Heart left ventricle (tissue), 16 donors: ENCODE measurements at regions of chr1 and their contacts with region 1.

Region 1: GRCh38 chr1:6800745-6801144 is 15.5 kb downstream of the CAMTA1 start:
- DNase-seq: no peak
- ATAC-seq: no peak
- H3K4me3 ChIP-seq: no peak overlapping the region
- H3K27ac ChIP-seq: peak overlapping the region in 11 of 12 donors; percentile 19 to 71 (median 53)
- H3K4me1 ChIP-seq: peaks cover 6 to 73% (median 53%) of the 10 kb centered on the region in 12 donors
- H3K27me3 ChIP-seq: no peaks in the 10 kb centered on the region
- CTCF ChIP-seq: no peak
- POLR2A ChIP-seq: no peak

Region 2: DNA sequence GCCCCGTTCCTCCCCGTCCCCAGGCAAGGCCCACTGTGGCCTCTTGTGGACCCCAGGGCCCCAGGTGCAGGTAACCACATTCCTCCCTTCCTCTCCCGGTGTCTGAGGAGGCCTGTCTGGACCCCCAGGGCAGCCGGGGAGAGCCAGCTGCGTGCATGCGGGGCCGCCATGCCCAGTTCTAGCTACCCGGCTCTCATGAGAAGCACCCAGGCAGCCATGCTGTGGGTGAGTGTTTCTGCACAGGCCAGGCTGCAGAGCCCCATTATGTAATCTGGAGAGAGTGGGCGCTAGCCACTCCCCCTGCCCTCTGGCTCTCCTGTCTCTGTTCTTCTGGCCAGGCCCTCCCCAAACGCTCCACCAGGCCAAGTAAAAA is 290.8 kb before region 1 on chr1:
- intact Hi-C with region 1: no loop called
- DNase-seq: peak in 1 of 5 donors; percentile 44
- ATAC-seq: peak in 3 of 4 donors; percentile 21 to 66 (median 41)
- H3K4me3 ChIP-seq: no peak overlapping the region
- H3K27ac ChIP-seq: peak overlapping the region in 1 of 12 donors; percentile 24
- H3K4me1 ChIP-seq: peaks cover 0 to 22% (median 0%) of the 10 kb centered on the region in 12 donors
- H3K27me3 ChIP-seq: no peaks in the 10 kb centered on the region
- CTCF ChIP-seq: no peak
- POLR2A ChIP-seq: no peak

Region 3: GRCh38 chr1:6880951-6881690 is 80.4 kb after region 1 on chr1:
- intact Hi-C with region 1: loop called in 5 of 10 experiments (anchors 2 to 10 kb)
- DNase-seq: no peak
- ATAC-seq: no peak
- H3K4me3 ChIP-seq: no peak overlapping the region
- H3K27ac ChIP-seq: no peak overlapping the region
- H3K4me1 ChIP-seq: peaks cover 0 to 2% (median 0%) of the 10 kb centered on the region in 12 donors
- H3K27me3 ChIP-seq: no peaks in the 10 kb centered on the region
- CTCF ChIP-seq: no peak
- POLR2A ChIP-seq: no peak

Region 4: DNA sequence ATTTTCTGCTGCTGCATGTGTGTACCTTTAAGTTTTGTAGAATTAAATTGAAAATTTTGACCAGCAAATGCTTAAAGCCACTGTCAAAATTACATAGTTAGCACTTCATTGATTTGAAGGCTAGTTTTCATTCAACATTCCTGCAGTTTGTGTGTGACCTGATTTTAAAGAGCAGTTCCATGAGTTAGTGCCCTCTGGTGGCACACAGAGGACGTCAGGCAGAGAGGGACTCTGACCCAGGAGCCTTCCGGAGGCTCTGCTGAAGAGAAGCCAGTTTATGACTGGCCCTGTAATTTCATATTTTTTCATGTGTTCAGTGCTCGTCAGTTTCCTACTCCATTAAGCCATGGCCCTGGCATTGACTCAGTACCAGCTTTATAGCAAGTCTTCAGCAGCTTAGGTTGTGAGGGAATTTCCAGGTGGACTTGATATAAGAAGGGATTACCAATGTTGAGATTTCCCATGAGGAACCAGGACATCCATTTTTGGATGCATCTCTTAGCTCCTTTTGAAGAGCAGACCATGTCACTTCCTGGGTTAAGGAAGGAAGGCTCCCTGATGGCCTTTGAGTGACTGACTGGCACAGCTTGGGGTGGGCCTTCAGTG is 89.2 kb after region 1 on chr1:
- intact Hi-C with region 1: loop called in 4 of 10 experiments (anchors 2 to 10 kb)
- DNase-seq: peak in 4 of 5 donors; percentile 38 to 52 (median 45)
- ATAC-seq: peak; percentile 37 to 84 (median 68)
- H3K4me3 ChIP-seq: no peak overlapping the region
- H3K27ac ChIP-seq: no peak overlapping the region
- H3K4me1 ChIP-seq: peaks cover 0 to 9% (median 0%) of the 10 kb centered on the region in 12 donors
- H3K27me3 ChIP-seq: no peaks in the 10 kb centered on the region
- CTCF ChIP-seq: peak; percentile 67 to 90 (median 80)
- POLR2A ChIP-seq: no peak